ENCODE measurements at regions of chr9 and their contacts with region 1.

Region 1: GRCh38 chr9:105608721-105609598 is 51.0 kb downstream of the FKTN start:
- DNase-seq: peak in 1 of 2 donors; percentile 63
- ATAC-seq: peak; percentile 74 to 89 (median 80)
- H3K4me3 ChIP-seq: no peak overlapping the region
- H3K4me3 Mint-ChIP-seq: peak overlapping the region; percentile 9
- H3K27ac ChIP-seq: peak overlapping the region; percentile 30
- H3K27ac Mint-ChIP-seq: peak overlapping the region; percentile 75 to 77
- H3K4me1 ChIP-seq: no peaks in the 10 kb centered on the region
- H3K4me1 Mint-ChIP-seq: peaks cover 0 to 8% of the 10 kb centered on the region in 2 donors
- H3K27me3 ChIP-seq: no peaks in the 10 kb centered on the region
- H3K27me3 Mint-ChIP-seq: no peaks in the 10 kb centered on the region
- CTCF ChIP-seq: peak; percentile 73

Region 2: GRCh38 chr9:105714020-105714331 is 105.0 kb after region 1 on chr9:
- intact Hi-C with region 1: loop called (anchors 1 kb)
- DNase-seq: no peak
- ATAC-seq: no peak
- H3K4me3 ChIP-seq: no peak overlapping the region
- H3K4me3 Mint-ChIP-seq: no peak overlapping the region
- H3K27ac ChIP-seq: no peak overlapping the region
- H3K27ac Mint-ChIP-seq: no peak overlapping the region
- H3K4me1 ChIP-seq: no peaks in the 10 kb centered on the region
- H3K4me1 Mint-ChIP-seq: no peaks in the 10 kb centered on the region
- H3K27me3 ChIP-seq: no peaks in the 10 kb centered on the region
- H3K27me3 Mint-ChIP-seq: no peaks in the 10 kb centered on the region
- CTCF ChIP-seq: no peak

Region 3: DNA sequence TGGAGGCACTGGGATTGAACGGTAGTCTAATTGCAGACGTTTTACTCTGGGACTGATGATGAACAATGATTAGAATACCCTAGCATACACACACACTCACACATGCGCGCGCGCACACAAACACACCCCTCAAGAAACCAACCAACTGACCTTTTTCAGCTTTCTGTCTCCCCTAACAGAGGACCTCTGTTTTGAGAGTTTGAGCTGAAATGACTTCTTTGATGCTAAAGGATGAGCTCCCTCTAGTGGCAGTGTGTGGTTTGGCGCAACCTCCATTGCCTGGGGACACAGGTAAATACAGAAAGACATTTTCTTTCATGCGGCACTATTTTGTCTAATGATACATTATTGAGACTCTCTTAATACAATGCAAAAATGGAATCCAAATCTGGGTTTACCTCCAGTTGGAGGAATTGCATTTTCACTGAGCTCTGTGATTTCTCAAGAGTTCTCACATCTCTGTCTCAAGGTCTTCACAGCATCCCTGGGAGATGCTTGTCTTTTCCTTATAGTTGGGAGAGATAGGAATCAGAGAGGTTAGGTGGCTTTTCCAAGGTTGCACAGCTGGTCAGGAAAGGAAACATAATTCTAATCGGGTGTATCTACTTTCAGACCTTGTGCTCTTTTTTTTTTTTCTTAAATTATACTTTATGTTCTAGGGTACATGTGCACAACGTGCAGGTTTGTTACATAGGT is 272.8 kb after region 1 on chr9:
- intact Hi-C with region 1: loop called (anchors 2 kb)
- DNase-seq: peak; percentile 40 to 76
- ATAC-seq: peak; percentile 46 to 82 (median 64)
- H3K4me3 ChIP-seq: no peak overlapping the region
- H3K4me3 Mint-ChIP-seq: no peak overlapping the region
- H3K27ac ChIP-seq: no peak overlapping the region
- H3K27ac Mint-ChIP-seq: no peak overlapping the region
- H3K4me1 ChIP-seq: peaks cover 6% of the 10 kb centered on the region
- H3K4me1 Mint-ChIP-seq: peaks cover 7 to 13% of the 10 kb centered on the region in 2 donors
- H3K27me3 ChIP-seq: no peaks in the 10 kb centered on the region
- H3K27me3 Mint-ChIP-seq: peaks cover 5 to 26% of the 10 kb centered on the region in 2 donors
- CTCF ChIP-seq: peak; percentile 92

Measured in natural killer cell (primary cell).